Caco-2 (cell line): ENCODE measurements at regions of chr20 and their contacts with region 1.

Region 1: GRCh38 chr20:58650776-58651558 is at the start of gene STX16:
- DNase-seq: peak; percentile 97 to 98
- H3K4me3 ChIP-seq: peak within 1 kb of the TSS; percentile 69
- H3K4me3 Mint-ChIP-seq: peak within 1 kb of the TSS; percentile 88
- H3K27ac Mint-ChIP-seq: peak within 1 kb of the TSS; percentile 91
- H3K4me1 ChIP-seq: peaks cover 23% of the 10 kb centered on the region
- H3K4me1 Mint-ChIP-seq: peaks cover 16% of the 10 kb centered on the region
- H3K27me3 ChIP-seq: no peaks in the 10 kb centered on the region
- H3K27me3 Mint-ChIP-seq: no peaks in the 10 kb centered on the region
- CTCF ChIP-seq: peak; percentile 88 to 96
- total RNA-seq, gene STX16: 82.2 and 97.0 TPM in 2 replicates

Region 2: GRCh38 chr20:58236612-58237330 is 414.2 kb before region 1 on chr20:
- CTCF ChIA-PET with region 1: interaction called, 21 read pairs
- POLR2A ChIA-PET with region 1: no interaction called
- intact Hi-C with region 1: loop called (anchors 2 kb)
- DNase-seq: peak; percentile 77 to 92
- H3K4me3 ChIP-seq: peak overlapping the region; percentile 40
- H3K4me3 Mint-ChIP-seq: peak overlapping the region; percentile 83
- H3K27ac Mint-ChIP-seq: no peak overlapping the region
- H3K4me1 ChIP-seq: no peaks in the 10 kb centered on the region
- H3K4me1 Mint-ChIP-seq: peaks cover 5% of the 10 kb centered on the region
- H3K27me3 ChIP-seq: peaks cover 5% of the 10 kb centered on the region; the same call in 1 of the 2 replicates
- H3K27me3 Mint-ChIP-seq: peaks cover 33% of the 10 kb centered on the region
- CTCF ChIP-seq: peak; percentile 99 to 100

Region 3: DNA sequence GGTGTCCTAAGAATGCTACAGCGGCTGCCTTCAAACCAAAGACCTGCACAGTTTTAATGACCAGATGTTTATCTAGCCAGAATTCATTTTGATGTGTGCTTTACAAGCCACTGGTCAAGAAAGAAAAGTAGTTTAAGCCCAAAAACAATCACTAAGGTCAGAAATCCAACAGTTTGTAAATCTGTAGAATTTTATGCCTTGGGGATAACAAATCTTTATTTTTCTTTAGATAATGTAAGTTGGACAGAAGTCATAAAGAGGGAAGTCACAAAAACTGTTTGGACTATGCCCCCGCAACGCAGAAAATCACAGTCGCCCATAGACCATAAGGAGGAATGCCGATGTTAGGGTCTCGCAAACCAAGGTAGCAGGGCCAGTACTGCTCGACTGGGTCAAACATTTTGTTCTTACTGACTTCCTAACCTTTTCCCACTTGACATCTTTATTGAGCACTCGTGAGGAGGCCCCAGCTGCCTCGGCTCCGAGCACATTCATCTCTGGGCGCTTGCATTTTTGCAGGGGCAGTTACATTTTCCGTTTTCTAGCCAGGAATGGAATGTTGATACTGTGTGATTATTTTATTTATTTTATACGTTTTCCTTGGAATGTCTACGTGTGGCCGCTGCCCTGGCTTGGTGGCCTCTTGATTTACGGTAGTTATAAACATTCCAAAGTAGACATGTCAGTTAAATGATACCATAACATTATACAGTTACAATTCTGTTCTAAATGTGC is 79.1 kb before region 1 on chr20:
- CTCF ChIA-PET with region 1: interaction called, 3 read pairs
- POLR2A ChIA-PET with region 1: interaction called, 10 read pairs
- intact Hi-C with region 1: loop called (anchors 2 kb)
- DNase-seq: peak; percentile 73 to 88
- H3K4me3 ChIP-seq: peak overlapping the region; percentile 10; the same call in 1 of the 2 replicates
- H3K4me3 Mint-ChIP-seq: peak overlapping the region; percentile 63
- H3K27ac Mint-ChIP-seq: peak overlapping the region; percentile 90
- H3K4me1 ChIP-seq: peaks cover 44% of the 10 kb centered on the region
- H3K4me1 Mint-ChIP-seq: peaks cover 18% of the 10 kb centered on the region
- H3K27me3 ChIP-seq: no peaks in the 10 kb centered on the region
- H3K27me3 Mint-ChIP-seq: no peaks in the 10 kb centered on the region
- CTCF ChIP-seq: no peak

Region 4: GRCh38 chr20:58692594-58693226 is 41.7 kb after region 1 on chr20 and contains the start of gene NPEPL1:
- CTCF ChIA-PET with region 1: interaction called, 9 read pairs
- POLR2A ChIA-PET with region 1: interaction called, 7 read pairs
- intact Hi-C with region 1: loop called (anchors 5 kb)
- DNase-seq: peak; percentile 68 to 93
- H3K4me3 ChIP-seq: peak within 1 kb of the TSS; percentile 72
- H3K4me3 Mint-ChIP-seq: peak within 1 kb of the TSS; percentile 72
- H3K27ac Mint-ChIP-seq: peak within 1 kb of the TSS; percentile 57
- H3K4me1 ChIP-seq: peaks cover 18% of the 10 kb centered on the region
- H3K4me1 Mint-ChIP-seq: no peaks in the 10 kb centered on the region
- H3K27me3 ChIP-seq: no peaks in the 10 kb centered on the region
- H3K27me3 Mint-ChIP-seq: no peaks in the 10 kb centered on the region
- CTCF ChIP-seq: peak in 1 of 2 experiments; percentile 33
- total RNA-seq, gene NPEPL1: 32.9 and 41.9 TPM in 2 replicates

Region 5: DNA sequence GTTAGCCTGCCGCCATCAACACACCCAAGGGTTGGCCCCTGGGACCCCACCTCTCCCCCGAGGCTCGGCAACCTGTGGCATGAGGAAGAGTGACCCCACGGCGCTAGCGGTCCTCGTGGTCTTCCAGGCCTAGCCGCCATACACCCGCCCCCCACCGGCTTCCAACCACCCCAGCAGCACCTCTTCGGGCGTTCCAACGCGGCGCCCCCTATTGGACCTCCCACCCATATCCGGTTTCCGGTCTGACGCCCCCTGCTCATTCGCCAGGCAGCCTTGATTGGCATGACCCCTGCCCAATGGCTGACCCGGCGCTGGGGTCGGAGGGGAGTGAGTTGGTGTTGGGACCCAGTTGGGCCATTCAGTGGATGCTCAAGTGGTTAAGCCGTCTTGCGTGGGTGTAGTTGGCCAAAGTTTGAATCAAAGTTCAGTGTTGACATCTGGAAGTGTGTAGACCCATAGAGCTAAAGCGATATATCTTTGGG is 199.8 kb after region 1 on chr20 and contains the start of gene GNAS-AS1:
- CTCF ChIA-PET with region 1: interaction called, 3 read pairs
- POLR2A ChIA-PET with region 1: no interaction called
- intact Hi-C with region 1: loop called (anchors 5 kb)
- DNase-seq: peak; percentile 94 to 95
- H3K4me3 ChIP-seq: peak within 1 kb of the TSS; percentile 49
- H3K4me3 Mint-ChIP-seq: peak within 1 kb of the TSS; percentile 84
- H3K27ac Mint-ChIP-seq: peak within 1 kb of the TSS; percentile 13
- H3K4me1 ChIP-seq: no peaks in the 10 kb centered on the region
- H3K4me1 Mint-ChIP-seq: peaks cover 8% of the 10 kb centered on the region
- H3K27me3 ChIP-seq: 0 out of 2 replicates have a peak, but pooled peaks cover 1% of the 10 kb centered on the region
- H3K27me3 Mint-ChIP-seq: peaks cover 26% of the 10 kb centered on the region
- CTCF ChIP-seq: peak in 1 of 2 experiments; percentile 15
- total RNA-seq, gene GNAS-AS1: 4.2 and 5.1 TPM in 2 replicates